ENCODE measurements at regions of chr11 and their contacts with region 1.

Region 1: DNA sequence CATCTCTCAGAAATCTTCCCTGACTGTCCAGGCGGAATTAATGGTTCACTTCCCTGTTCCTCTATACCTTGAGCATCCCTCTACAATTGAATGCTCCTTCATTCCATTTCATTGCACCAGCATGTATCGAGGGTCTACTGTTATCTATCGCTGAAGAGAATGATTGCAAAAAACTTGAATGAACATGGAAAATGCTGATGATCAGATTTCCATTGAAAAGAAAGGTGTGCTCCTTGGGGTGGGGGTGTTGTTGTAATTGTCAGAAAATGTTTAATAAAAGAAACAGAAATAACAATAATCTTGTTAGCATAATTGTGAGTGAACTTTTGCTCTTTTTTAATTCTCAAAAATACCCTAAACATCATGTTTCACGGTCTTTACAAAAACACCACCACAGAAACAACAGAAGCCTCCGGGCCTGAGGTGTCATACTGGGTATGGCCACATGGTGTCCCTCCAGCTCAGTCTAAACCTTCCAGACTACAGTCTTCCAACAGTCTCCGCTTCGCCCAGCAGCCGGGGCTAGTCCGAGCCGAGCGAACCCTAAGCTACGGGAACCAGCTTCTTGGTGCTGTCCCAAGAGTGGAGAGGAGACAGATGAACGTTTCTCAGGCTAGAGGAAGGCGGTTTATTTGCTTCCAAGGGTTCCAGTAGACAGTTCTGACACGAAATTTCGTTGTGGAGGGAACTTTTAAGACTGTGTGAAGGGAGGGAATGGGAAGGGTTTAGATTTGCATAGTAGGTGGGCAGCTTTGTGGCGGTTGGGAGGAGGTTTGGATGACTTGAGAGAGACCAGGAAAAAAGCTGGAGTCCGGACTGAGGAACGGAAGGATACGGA is 75.8 kb upstream of the ZBED5 start:
- DNase-seq: peak; percentile 92
- H3K27ac ChIP-seq: peak overlapping the region; percentile 83
- CTCF ChIP-seq: peak; percentile 94

Region 2: GRCh38 chr11:10792398-10792975 is 141.2 kb before region 1 on chr11:
- CTCF ChIA-PET with region 1: interaction called, 10 read pairs
- POLR2A ChIA-PET with region 1: no interaction called
- DNase-seq: peak; percentile 83
- H3K27ac ChIP-seq: no peak overlapping the region
- CTCF ChIP-seq: peak; percentile 93

Region 3: GRCh38 chr11:10808553-10809372 is 124.9 kb before region 1 on chr11 and contains the start of gene EIF4G2:
- CTCF ChIA-PET with region 1: interaction called, 3 read pairs
- POLR2A ChIA-PET with region 1: interaction called, 13 read pairs
- DNase-seq: peak; percentile 99
- H3K27ac ChIP-seq: peak within 1 kb of the TSS; percentile 96
- CTCF ChIP-seq: no peak

Region 4: GRCh38 chr11:10899121-10899830 is 34.4 kb before region 1 on chr11:
- CTCF ChIA-PET with region 1: interaction called, 5 read pairs
- POLR2A ChIA-PET with region 1: interaction called, 12 read pairs
- DNase-seq: peak; percentile 94
- H3K27ac ChIP-seq: peak overlapping the region; percentile 100
- CTCF ChIP-seq: no peak

Region 5: GRCh38 chr11:11022125-11022730 is 88.6 kb after region 1 on chr11:
- CTCF ChIA-PET with region 1: interaction called, 20 read pairs
- POLR2A ChIA-PET with region 1: interaction called, 6 read pairs
- DNase-seq: peak; percentile 44
- H3K27ac ChIP-seq: no peak overlapping the region
- CTCF ChIP-seq: peak; percentile 42

Region 6: DNA sequence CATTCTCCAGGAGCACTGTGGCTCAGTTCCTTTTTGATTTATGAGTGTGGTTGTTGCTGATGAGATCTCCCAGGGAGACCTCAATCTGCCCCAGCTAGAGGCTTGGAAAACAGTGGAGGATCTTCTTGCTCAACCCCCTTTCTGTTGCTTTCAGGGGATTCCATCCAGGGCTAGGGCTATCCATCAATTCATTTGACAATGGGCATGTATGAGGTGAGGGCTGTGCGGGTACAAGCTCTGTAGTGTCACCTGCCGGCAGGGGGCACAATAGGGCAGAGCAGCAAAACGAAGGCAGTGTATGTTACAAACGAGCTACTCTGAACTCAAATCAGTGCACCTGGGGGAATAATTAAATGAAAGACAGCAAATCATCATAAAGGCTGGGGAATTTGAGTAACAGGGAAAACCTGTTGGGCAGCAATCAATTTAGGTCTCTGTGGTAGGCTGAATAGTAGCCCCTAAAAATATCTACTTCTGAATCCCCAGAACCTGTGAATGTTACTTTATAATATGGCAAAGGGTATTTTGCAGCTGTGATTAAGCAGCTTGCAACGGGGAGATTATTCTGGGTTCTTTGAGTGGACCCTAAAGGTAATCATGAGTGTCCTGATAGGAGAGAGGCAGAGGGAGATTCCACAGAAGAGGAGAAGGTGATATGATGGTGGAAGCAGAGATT is 94.5 kb after region 1 on chr11:
- CTCF ChIA-PET with region 1: interaction called, 13 read pairs
- POLR2A ChIA-PET with region 1: no interaction called
- DNase-seq: peak; percentile 52
- H3K27ac ChIP-seq: no peak overlapping the region
- CTCF ChIP-seq: peak; percentile 83

Region 7: DNA sequence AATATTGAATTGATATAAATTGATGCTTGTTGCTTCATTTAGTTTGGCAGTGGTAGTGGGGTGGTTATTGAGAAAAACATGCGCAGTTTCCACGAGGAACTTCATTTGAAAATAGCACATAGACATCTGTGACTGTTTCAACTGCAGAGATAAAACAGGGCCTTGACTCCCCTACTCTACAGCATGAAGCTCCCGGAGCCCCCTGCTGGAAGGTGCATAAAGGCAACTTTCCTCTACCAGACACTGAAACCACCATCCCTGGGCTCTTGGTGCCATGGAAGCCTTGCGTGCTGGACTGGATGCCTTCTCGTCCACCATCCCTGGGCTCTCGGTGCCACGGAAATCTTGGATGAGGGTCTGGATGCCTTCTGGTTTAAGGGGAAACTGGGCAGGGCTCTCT is 223.5 kb after region 1 on chr11:
- CTCF ChIA-PET with region 1: no interaction called
- POLR2A ChIA-PET with region 1: no interaction called
- DNase-seq: no peak
- H3K27ac ChIP-seq: no peak overlapping the region
- CTCF ChIP-seq: 0 out of 2 replicates have a peak, but pooled peaks have one; percentile 9

Region 8: GRCh38 chr11:11787305-11788062 is 853.8 kb after region 1 on chr11:
- CTCF ChIA-PET with region 1: interaction called, 12 read pairs
- POLR2A ChIA-PET with region 1: no interaction called
- DNase-seq: peak; percentile 72
- H3K27ac ChIP-seq: no peak overlapping the region
- CTCF ChIP-seq: peak; percentile 77